ENCODE measurements at regions of chr6 and their contacts with region 1.

Region 1: GRCh38 chr6:152948150-152948768 is 34.6 kb downstream of the FBXO5 start:
- H3K4me3 ChIP-seq: no peak overlapping the region
- H3K27ac ChIP-seq: no peak overlapping the region
- H3K4me1 ChIP-seq: no peaks in the 10 kb centered on the region
- CTCF ChIP-seq: peak; percentile 55

Region 2: GRCh38 chr6:152750694-152751093 is 197.6 kb before region 1 on chr6 and contains the start of gene VIP:
- CTCF ChIA-PET with region 1: interaction called, 30 read pairs
- POLR2A ChIA-PET with region 1: no interaction called
- H3K4me3 ChIP-seq: no peak within 1 kb of the TSS
- H3K27ac ChIP-seq: no peak within 1 kb of the TSS
- H3K4me1 ChIP-seq: no peaks in the 10 kb centered on the region
- CTCF ChIP-seq: no peak

Region 3: GRCh38 chr6:152922706-152923105 is 25.6 kb before region 1 on chr6:
- CTCF ChIA-PET with region 1: interaction called, 13 read pairs
- POLR2A ChIA-PET with region 1: no interaction called
- H3K4me3 ChIP-seq: no peak overlapping the region
- H3K27ac ChIP-seq: no peak overlapping the region
- H3K4me1 ChIP-seq: no peaks in the 10 kb centered on the region
- CTCF ChIP-seq: no peak

Measured in HEK293 (cell line).